ENCODE measurements at regions of chr14 and their contacts with region 1.

Region 1: GRCh38 chr14:52706724-52707706 is at the start of gene PSMC6:
- DNase-seq: peak; percentile 83
- ATAC-seq: peak; percentile 98
- H3K4me3 ChIP-seq: peak within 1 kb of the TSS; percentile 90
- H3K27ac ChIP-seq: peak within 1 kb of the TSS; percentile 98
- H3K4me1 ChIP-seq: peaks cover 4% of the 10 kb centered on the region
- H3K27me3 ChIP-seq: no peaks in the 10 kb centered on the region
- CTCF ChIP-seq: no peak
- POLR2A ChIP-seq: peak; percentile 93
- RAD21 ChIP-seq: no peak
- total RNA-seq, gene PSMC6: 62.9 and 139 TPM in 2 replicates

Region 2: GRCh38 chr14:52015411-52016030 is 691.5 kb before region 1 on chr14:
- CTCF ChIA-PET with region 1: no interaction called
- POLR2A ChIA-PET with region 1: no interaction called
- dilution Hi-C with region 1: no loop called
- in situ Hi-C with region 1: loop called (anchors 25 kb)
- intact Hi-C with region 1: no loop called
- DNase-seq: peak; percentile 17
- ATAC-seq: peak; percentile 60
- H3K4me3 ChIP-seq: no peak overlapping the region
- H3K27ac ChIP-seq: no peak overlapping the region
- H3K4me1 ChIP-seq: peaks cover 4% of the 10 kb centered on the region; the same call in 1 of the 2 replicates
- H3K27me3 ChIP-seq: no peaks in the 10 kb centered on the region
- CTCF ChIP-seq: peak; percentile 39
- POLR2A ChIP-seq: no peak
- RAD21 ChIP-seq: peak; percentile 26; the same call in 1 of the 2 replicates

Region 3: DNA sequence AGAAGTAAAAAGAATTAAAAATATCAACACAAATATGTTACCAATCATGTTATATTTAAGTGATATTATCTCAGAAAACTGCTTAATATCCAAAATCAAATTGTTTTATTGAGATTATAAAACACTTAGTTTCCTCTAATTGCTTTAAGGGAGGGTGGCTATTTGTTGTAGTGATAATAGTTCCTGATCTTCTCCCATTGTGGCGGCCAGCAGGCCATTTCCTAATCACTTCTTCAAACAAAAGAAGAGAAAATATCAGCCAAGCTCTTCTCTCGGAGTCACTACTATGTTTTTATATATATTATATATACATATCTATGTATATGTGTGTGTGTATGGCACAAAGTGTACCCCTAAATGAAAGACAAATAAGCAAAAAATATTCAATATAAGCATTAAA is 43.2 kb before region 1 on chr14:
- CTCF ChIA-PET with region 1: no interaction called
- POLR2A ChIA-PET with region 1: no interaction called
- dilution Hi-C with region 1: no loop called
- in situ Hi-C with region 1: no loop called
- intact Hi-C with region 1: no loop called
- DNase-seq: no peak
- ATAC-seq: no peak
- H3K4me3 ChIP-seq: no peak overlapping the region
- H3K27ac ChIP-seq: no peak overlapping the region
- H3K4me1 ChIP-seq: no peaks in the 10 kb centered on the region
- H3K27me3 ChIP-seq: no peaks in the 10 kb centered on the region
- CTCF ChIP-seq: no peak
- POLR2A ChIP-seq: no peak
- RAD21 ChIP-seq: no peak

Measured in IMR-90 (cell line).